Aorta (tissue), 5 donors: ENCODE measurements at regions of chr16 and their contacts with region 1.

Region 1: GRCh38 chr16:85172455-85173145 is 60.3 kb upstream of the CIBAR2 start:
- DNase-seq: peak in 1 of 2 donors; percentile 79
- ATAC-seq: no peak
- H3K4me3 ChIP-seq: no peak overlapping the region
- H3K27ac ChIP-seq: no peak overlapping the region
- H3K4me1 ChIP-seq: no peaks in the 10 kb centered on the region
- H3K27me3 ChIP-seq: no peaks in the 10 kb centered on the region

Region 2: DNA sequence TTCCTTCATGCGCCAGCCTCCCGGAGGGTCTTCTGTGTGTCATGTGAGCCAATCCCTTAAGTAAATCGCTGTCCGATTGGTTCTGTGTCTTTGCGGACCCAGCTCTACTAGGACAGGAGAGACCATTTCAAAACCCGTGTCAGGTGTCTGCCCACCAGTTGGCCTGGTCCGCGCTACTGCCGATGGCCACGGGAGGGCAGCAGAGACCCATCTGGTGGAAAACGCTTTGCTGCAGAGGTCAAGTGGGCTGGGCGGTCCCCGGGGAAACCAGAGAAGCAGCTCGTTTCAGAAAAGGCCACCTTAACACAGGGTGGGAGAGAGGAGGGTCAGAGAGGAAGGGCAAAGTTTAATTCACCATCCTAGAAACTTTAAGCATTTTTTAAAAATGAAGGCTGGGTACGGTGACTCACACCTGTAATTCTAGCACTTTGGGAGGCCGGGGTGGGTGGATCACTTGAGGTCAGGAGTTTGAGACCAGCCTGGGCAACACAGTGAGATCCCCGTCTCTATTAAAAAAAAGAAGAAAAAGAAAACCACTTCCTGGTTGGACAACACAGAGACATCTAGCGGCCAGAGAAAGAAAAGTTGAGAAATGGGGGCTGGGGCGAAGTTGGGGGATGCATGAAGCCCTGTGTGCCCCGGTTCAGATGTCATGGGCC is 57.6 kb before region 1 on chr16:
- intact Hi-C with region 1: loop called in 1 of 2 experiments (anchors 10 kb)
- DNase-seq: peak; percentile 93 to 97
- ATAC-seq: peak; percentile 92
- H3K4me3 ChIP-seq: no peak overlapping the region
- H3K27ac ChIP-seq: no peak overlapping the region
- H3K4me1 ChIP-seq: no peaks in the 10 kb centered on the region
- H3K27me3 ChIP-seq: no peaks in the 10 kb centered on the region

Region 3: DNA sequence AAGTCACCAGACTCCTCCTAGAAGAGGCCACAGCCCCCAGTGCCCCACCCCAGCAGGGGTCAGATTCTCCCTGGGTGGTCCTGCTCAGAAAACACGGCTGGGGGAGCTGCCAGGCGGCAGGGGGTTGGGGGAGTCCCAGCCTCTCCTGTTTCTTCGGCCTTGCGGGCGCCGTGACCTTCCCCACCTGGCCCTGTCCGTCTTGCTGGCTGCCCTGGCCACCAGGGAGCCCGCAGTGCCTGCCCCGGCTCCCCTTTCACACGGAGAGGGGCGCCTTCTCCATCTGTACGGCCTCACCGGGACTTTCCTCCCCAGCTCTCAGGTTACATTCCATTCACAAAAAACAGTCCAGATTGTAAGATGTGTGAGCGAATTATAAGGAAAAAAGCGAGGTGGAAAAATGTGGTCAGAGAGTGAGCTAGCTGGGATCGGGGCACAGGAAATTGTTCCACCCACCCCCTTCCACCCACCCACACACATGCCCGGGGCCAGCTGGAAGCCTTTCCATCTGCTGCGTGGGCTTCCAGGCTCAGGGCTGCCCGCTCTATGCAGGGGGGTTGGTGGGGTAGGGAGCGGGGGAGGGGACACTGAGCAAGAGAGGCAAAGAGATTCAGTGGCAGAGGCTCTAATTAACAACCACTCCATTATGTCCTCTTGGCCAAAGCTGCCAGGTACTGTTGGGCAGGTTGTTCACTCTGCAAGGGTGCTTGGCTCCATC is 45.7 kb before region 1 on chr16:
- intact Hi-C with region 1: loop called in 1 of 2 experiments (anchors 5 kb)
- DNase-seq: peak; percentile 74 to 92
- ATAC-seq: peak; percentile 54
- H3K4me3 ChIP-seq: no peak overlapping the region
- H3K27ac ChIP-seq: peak overlapping the region; percentile 66 to 71
- H3K4me1 ChIP-seq: peaks cover 3 to 7% of the 10 kb centered on the region in 2 donors
- H3K27me3 ChIP-seq: no peaks in the 10 kb centered on the region

Region 4: GRCh38 chr16:85202631-85203461 is 30.2 kb after region 1 on chr16:
- intact Hi-C with region 1: loop called in 1 of 2 experiments (anchors 5 kb)
- DNase-seq: peak; percentile 87 to 92
- ATAC-seq: peak; percentile 87
- H3K4me3 ChIP-seq: no peak overlapping the region
- H3K27ac ChIP-seq: peak overlapping the region; percentile 39 to 76
- H3K4me1 ChIP-seq: peaks cover 0 to 4% of the 10 kb centered on the region in 2 donors
- H3K27me3 ChIP-seq: no peaks in the 10 kb centered on the region

Region 5: DNA sequence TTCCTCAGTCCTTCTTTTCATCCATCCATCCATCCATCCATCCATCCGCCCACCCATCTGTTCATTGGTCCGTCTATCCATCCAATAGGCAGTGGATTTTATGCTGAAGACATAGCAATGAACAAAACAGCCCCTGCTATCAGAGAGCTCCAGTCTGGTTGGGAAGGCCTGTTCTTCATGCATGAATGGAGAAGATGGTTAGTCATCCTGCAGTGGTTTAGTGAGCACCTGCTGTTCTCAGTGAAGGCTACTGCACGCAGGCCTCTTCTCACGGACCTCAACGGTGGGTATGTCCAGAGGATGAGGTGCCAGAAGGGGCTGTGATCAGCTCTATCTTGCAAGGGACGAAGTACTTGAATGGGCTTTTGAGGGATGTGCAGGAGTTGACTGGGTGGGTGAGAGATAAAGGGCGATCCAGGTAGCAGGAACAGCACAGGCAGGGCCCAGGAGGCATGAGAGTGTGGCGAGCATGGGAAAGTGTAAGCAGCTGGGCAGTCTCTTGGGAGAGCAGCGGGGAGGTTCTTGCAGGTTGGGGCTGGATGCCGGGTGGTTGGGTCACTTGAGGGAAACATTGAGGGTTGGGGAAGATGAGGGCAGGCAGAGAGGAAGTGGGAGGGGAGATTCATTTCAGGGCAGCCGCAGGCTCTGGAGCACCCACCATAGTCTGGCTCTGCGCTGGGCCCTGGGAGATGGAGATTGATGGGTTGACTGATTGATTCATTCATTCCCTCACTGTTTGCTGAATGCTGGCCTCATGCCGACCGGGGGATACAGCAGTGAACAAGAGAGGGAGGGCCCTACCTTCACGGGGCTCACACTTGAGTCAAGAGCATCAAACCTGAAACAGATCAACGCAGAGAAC is 54.7 kb after region 1 on chr16:
- intact Hi-C with region 1: loop called in 1 of 2 experiments (anchors 5 kb)
- DNase-seq: no peak
- ATAC-seq: no peak
- H3K4me3 ChIP-seq: no peak overlapping the region
- H3K27ac ChIP-seq: no peak overlapping the region
- H3K4me1 ChIP-seq: peaks cover 0 to 2% of the 10 kb centered on the region in 2 donors
- H3K27me3 ChIP-seq: no peaks in the 10 kb centered on the region